ENCODE measurements at regions of chr11 and their contacts with region 1.

Region 1: DNA sequence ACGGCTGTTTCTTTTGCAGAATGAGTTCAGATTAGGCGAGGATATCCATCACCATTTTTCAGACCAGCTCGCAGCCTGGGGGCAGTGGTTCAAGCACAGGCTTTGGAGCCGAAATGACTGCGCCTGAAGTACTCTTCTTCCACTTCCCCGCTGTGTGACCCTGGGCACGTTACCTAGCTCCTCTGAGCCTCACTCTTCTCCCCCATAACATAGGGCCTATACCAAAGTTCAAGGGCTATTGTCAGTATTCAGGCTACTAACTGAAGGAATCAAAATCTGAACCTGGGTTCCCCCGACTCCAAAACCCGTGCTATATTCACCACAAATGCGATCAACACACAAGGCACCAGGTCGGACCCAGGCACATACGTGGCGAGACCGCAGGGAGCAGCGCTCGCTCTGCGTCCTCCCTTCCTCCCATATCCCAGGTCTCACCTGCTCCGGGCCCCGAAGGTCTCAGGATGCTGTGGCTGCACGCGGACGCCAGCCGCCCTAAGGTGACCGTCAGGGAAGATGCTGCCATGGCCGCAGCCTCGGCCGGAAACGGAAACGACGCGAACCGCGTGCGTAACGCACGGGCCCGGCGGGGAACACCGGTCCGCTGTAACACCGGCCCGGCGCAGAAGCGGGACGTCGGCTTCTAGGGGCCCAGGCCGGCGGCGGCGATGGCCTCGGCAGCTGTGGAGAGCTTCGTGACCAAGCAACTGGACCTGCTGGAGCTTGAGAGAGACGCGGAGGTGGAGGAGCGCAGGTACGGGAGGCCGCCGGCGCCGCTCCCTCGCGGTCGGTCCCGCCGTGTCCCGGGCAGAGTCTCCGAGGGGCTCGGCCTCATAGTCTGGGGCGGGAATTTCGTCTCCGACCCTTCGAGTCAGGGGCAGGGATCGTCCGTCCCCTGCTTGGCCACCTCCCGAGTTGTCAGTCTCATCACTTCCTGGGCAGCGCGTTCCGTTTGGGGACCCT is at the starts of genes IGHMBP2 and MRPL21:
- DNase-seq: peak; percentile 93
- ATAC-seq: peak; percentile 94
- H3K4me3 Mint-ChIP-seq: peak within 1 kb of the TSS; percentile 93
- H3K27ac Mint-ChIP-seq: peak within 1 kb of the TSS; percentile 91
- H3K4me1 Mint-ChIP-seq: peaks cover 29% of the 10 kb centered on the region
- H3K27me3 Mint-ChIP-seq: no peaks in the 10 kb centered on the region
- total RNA-seq, gene IGHMBP2: 20.9 to 25.4 TPM
- total RNA-seq, gene MRPL21: 100 to 102 TPM

Region 2: GRCh38 chr11:69088676-69089146 is 185.1 kb after region 1 on chr11:
- CTCF ChIA-PET with region 1: no interaction called
- POLR2A ChIA-PET with region 1: no interaction called
- intact Hi-C with region 1: loop called (anchors 5 to 10 kb)
- DNase-seq: peak; percentile 78
- ATAC-seq: peak; percentile 63
- H3K4me3 Mint-ChIP-seq: no peak overlapping the region
- H3K27ac Mint-ChIP-seq: no peak overlapping the region
- H3K4me1 Mint-ChIP-seq: no peaks in the 10 kb centered on the region
- H3K27me3 Mint-ChIP-seq: no peaks in the 10 kb centered on the region

Region 3: GRCh38 chr11:70270104-70270876 is 1366.7 kb after region 1 on chr11 and contains the start of gene PPFIA1:
- CTCF ChIA-PET with region 1: no interaction called
- POLR2A ChIA-PET with region 1: no interaction called
- intact Hi-C with region 1: loop called in 1 of 2 experiments (anchors 10 kb)
- DNase-seq: peak; percentile 97
- ATAC-seq: peak; percentile 95
- H3K4me3 Mint-ChIP-seq: peak within 1 kb of the TSS; percentile 92
- H3K27ac Mint-ChIP-seq: peak within 1 kb of the TSS; percentile 89
- H3K4me1 Mint-ChIP-seq: peaks cover 31% of the 10 kb centered on the region
- H3K27me3 Mint-ChIP-seq: peaks cover 10% of the 10 kb centered on the region
- total RNA-seq, gene PPFIA1: 26.5 to 40.5 TPM

Measured in activated CD4-positive, alpha-beta T cell treated with anti-CD3 and anti-CD28 coated beads for 36 hours (primary cell).